PC-3 (cell line): ENCODE measurements at regions of chr17 and their contacts with region 1.

Region 1: GRCh38 chr17:1839516-1839915 is 9.7 kb downstream of the RPA1 start:
- DNase-seq: no peak
- ATAC-seq: no peak
- H3K4me3 ChIP-seq: no peak overlapping the region
- H3K27ac ChIP-seq: no peak overlapping the region
- H3K4me1 ChIP-seq: no peaks in the 10 kb centered on the region
- H3K27me3 ChIP-seq: no peaks in the 10 kb centered on the region
- CTCF ChIP-seq: no peak

Region 2: DNA sequence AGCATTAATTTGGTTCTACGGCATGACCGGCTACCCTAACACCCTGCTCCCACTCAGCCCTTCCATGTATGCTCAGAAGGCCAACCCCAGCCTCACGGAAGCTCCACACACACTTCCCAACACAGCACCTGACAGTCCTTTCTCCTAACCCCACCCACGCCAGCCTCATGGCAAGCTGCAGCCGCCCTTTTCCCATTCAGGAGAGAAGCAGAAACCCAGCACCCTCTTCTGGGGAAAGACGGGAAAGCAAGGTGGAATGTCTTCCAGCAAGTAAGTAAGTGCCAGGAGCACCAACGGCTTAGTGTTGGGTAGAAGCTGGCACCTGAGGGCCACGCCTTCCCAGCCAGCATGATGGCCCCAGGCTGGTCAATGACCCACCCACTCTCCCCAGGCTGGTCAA is 691.9 kb before region 1 on chr17:
- CTCF ChIA-PET with region 1: no interaction called
- POLR2A ChIA-PET with region 1: no interaction called
- intact Hi-C with region 1: no loop called
- DNase-seq: peak; percentile 80
- ATAC-seq: peak; percentile 85
- H3K4me3 ChIP-seq: no peak overlapping the region
- H3K27ac ChIP-seq: no peak overlapping the region
- H3K4me1 ChIP-seq: no peaks in the 10 kb centered on the region
- H3K27me3 ChIP-seq: no peaks in the 10 kb centered on the region
- CTCF ChIP-seq: peak; percentile 70

Region 3: GRCh38 chr17:1206026-1206777 is 633.3 kb before region 1 on chr17:
- CTCF ChIA-PET with region 1: interaction called, 13 read pairs
- POLR2A ChIA-PET with region 1: no interaction called
- intact Hi-C with region 1: no loop called
- DNase-seq: no peak
- ATAC-seq: no peak
- H3K4me3 ChIP-seq: no peak overlapping the region
- H3K27ac ChIP-seq: no peak overlapping the region
- H3K4me1 ChIP-seq: peaks cover 5% of the 10 kb centered on the region; the same call in 1 of the 2 replicates
- H3K27me3 ChIP-seq: no peaks in the 10 kb centered on the region
- CTCF ChIP-seq: no peak

Region 4: GRCh38 chr17:1820528-1821252 is 18.8 kb before region 1 on chr17:
- CTCF ChIA-PET with region 1: no interaction called
- POLR2A ChIA-PET with region 1: no interaction called
- intact Hi-C with region 1: no loop called
- DNase-seq: no peak
- ATAC-seq: no peak
- H3K4me3 ChIP-seq: no peak overlapping the region
- H3K27ac ChIP-seq: no peak overlapping the region
- H3K4me1 ChIP-seq: no peaks in the 10 kb centered on the region
- H3K27me3 ChIP-seq: no peaks in the 10 kb centered on the region
- CTCF ChIP-seq: no peak

Region 5: GRCh38 chr17:1931759-1932579 is 92.5 kb after region 1 on chr17:
- CTCF ChIA-PET with region 1: no interaction called
- POLR2A ChIA-PET with region 1: no interaction called
- intact Hi-C with region 1: no loop called
- DNase-seq: peak; percentile 47
- ATAC-seq: peak; percentile 82
- H3K4me3 ChIP-seq: no peak overlapping the region
- H3K27ac ChIP-seq: no peak overlapping the region
- H3K4me1 ChIP-seq: peaks cover 4% of the 10 kb centered on the region; the same call in 1 of the 2 replicates
- H3K27me3 ChIP-seq: no peaks in the 10 kb centered on the region
- CTCF ChIP-seq: no peak